Activated CD8-positive, alpha-beta T cell treated with anti-CD3 and anti-CD28 coated beads, Interleukin-2, amount 10 ng/mL, durations not matched to agents 7 days and 5 days (primary cell): ENCODE measurements at regions of chr22 and their contacts with region 1.

Region 1: DNA sequence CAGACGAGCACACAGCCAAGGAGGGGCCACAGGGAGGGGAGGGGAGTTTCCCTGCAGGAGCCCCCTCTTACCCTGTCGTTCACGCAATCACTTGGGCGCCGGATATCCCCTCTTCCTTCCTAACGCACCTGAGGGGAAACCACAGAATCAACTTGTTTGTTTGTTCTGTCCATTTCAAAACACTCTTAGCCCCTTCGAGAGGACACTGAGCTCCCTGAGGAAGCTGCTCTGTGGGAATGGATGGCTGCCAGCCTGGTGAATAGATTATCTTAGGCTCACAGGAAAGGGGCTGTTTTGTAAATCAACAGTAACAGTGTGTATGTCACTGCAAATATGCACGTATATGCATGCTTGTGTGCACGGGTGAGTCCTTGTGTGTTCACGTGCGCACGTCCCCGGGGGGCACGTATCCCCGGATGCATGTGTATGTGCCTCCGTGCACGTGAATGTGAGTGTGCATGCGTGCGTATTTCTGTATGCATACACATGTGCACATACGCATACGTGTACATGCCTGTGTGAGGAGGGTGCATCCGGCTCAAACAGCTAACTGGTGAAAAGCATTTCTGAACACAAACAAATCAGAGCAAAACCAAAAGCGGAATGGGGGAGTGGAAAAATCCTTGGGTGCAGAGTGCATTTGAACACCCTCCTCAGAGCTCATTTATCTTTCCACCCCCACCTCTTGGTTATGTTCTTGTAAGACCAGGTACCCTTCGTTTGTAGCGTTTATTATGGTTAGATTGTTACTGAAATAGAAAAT is 7.2 kb downstream of the ARSA start:
- DNase-seq: peak; percentile 95
- ATAC-seq: peak; percentile 79
- H3K4me3 Mint-ChIP-seq: peak overlapping the region; percentile 84
- H3K27ac Mint-ChIP-seq: peak overlapping the region; percentile 100
- H3K4me1 Mint-ChIP-seq: peaks cover 42% of the 10 kb centered on the region
- H3K27me3 Mint-ChIP-seq: peaks cover 2% of the 10 kb centered on the region

Region 2: DNA sequence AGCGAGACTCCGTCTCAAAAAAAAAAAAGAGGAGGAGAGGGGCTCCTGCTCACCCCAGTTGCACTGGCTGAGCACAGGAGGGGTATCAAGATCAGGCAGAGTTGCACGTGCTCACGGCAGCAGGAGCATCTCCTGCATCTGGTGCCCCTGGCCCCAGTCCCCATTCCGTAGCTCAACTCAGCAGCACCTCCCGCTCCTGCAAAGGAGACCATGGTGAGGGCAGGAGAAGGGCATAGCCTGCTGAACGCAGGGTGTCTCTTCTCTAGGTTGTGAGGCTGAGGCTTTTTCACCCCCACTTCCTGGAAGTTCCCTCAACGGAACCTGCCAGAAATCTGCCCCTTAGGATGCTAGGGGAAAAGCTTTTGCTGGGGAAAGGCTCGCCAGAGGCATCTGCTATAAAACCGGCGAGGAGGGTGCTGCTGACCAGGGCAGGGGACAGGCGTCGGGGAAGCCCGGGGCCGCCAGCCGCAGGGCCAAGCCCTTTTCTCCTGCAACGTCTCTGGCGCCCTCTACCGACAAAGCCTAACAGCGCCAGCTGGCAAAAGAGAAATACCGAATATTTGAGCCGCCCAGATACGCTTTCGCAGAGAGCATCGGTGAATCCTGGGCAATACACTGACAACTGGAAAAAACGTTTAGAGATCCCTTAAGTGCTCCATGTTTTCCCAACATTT is 278.7 kb before region 1 on chr22:
- CTCF ChIA-PET with region 1: interaction called, 13 read pairs
- POLR2A ChIA-PET with region 1: no interaction called
- DNase-seq: peak; percentile 93
- ATAC-seq: peak; percentile 59
- H3K4me3 Mint-ChIP-seq: peak overlapping the region; percentile 80
- H3K27ac Mint-ChIP-seq: peak overlapping the region; percentile 89
- H3K4me1 Mint-ChIP-seq: peaks cover 16% of the 10 kb centered on the region
- H3K27me3 Mint-ChIP-seq: no peaks in the 10 kb centered on the region

Region 3: GRCh38 chr22:50507991-50508884 is 112.5 kb before region 1 on chr22 and contains the start of gene NCAPH2:
- CTCF ChIA-PET with region 1: interaction called, 31 read pairs
- POLR2A ChIA-PET with region 1: interaction called, 22 read pairs
- DNase-seq: peak; percentile 98
- ATAC-seq: peak; percentile 76
- H3K4me3 Mint-ChIP-seq: peak within 1 kb of the TSS; percentile 98
- H3K27ac Mint-ChIP-seq: peak within 1 kb of the TSS; percentile 94
- H3K4me1 Mint-ChIP-seq: peaks cover 25% of the 10 kb centered on the region
- H3K27me3 Mint-ChIP-seq: no peaks in the 10 kb centered on the region
- total RNA-seq, gene NCAPH2: 146 to 150 TPM

Region 4: DNA sequence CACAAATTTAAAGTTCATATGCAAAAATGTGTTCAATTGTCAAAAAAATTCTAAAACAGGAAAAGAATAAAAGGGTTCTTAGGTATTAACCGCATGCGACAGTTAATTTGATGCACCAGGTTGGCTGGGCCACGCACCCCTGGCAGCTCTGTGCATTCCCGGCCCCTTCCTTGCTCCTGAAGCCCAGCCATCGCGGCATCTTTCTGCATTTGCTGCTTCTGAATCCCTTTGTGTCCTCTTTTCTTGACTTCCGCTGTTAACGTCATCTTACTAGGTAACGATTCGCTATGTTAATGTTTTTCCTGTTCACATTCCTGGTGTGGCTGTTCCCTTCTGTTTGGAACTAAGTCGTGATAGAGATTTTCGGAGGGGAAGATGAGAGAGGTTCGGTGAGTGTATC is 83.0 kb before region 1 on chr22:
- CTCF ChIA-PET with region 1: interaction called, 39 read pairs
- POLR2A ChIA-PET with region 1: interaction called, 73 read pairs
- DNase-seq: no peak
- ATAC-seq: no peak
- H3K4me3 Mint-ChIP-seq: no peak overlapping the region
- H3K27ac Mint-ChIP-seq: peak overlapping the region; percentile 100
- H3K4me1 Mint-ChIP-seq: peaks cover 73% of the 10 kb centered on the region
- H3K27me3 Mint-ChIP-seq: no peaks in the 10 kb centered on the region

Region 5: GRCh38 chr22:50562523-50563412 is 58.0 kb before region 1 on chr22 and contains the start of gene SYCE3:
- CTCF ChIA-PET with region 1: interaction called, 16 read pairs
- POLR2A ChIA-PET with region 1: interaction called, 4 read pairs
- DNase-seq: peak; percentile 98
- ATAC-seq: peak; percentile 97
- H3K4me3 Mint-ChIP-seq: peak within 1 kb of the TSS; percentile 91
- H3K27ac Mint-ChIP-seq: peak within 1 kb of the TSS; percentile 85
- H3K4me1 Mint-ChIP-seq: peaks cover 19% of the 10 kb centered on the region
- H3K27me3 Mint-ChIP-seq: peaks cover 16% of the 10 kb centered on the region
- total RNA-seq, gene SYCE3: not detected

Region 6: DNA sequence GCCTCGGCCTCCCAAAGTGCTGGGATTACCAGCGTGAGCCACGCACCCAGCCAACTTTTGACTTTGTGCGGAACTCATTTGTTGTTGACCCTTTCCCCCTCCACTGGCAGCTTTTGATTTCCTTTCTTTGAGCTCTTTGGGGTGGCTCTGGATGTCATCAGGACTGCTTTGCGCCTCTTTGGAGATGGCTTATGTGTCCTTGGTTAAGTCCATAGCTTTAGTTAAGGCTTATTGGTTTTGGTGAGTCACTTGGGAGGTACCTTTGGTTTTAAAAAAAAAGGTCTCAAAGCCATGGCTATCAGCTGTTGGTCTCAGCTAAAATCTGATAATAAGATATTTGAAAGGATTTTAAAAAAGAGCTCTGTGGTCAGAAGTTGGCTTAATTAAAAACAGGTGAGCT is 12.3 kb after region 1 on chr22:
- CTCF ChIA-PET with region 1: interaction called, 10 read pairs
- POLR2A ChIA-PET with region 1: no interaction called
- DNase-seq: no peak
- ATAC-seq: no peak
- H3K4me3 Mint-ChIP-seq: no peak overlapping the region
- H3K27ac Mint-ChIP-seq: no peak overlapping the region
- H3K4me1 Mint-ChIP-seq: peaks cover 15% of the 10 kb centered on the region
- H3K27me3 Mint-ChIP-seq: peaks cover 3% of the 10 kb centered on the region